ENCODE measurements at regions of chr10 and their contacts with region 1.

Region 1: DNA sequence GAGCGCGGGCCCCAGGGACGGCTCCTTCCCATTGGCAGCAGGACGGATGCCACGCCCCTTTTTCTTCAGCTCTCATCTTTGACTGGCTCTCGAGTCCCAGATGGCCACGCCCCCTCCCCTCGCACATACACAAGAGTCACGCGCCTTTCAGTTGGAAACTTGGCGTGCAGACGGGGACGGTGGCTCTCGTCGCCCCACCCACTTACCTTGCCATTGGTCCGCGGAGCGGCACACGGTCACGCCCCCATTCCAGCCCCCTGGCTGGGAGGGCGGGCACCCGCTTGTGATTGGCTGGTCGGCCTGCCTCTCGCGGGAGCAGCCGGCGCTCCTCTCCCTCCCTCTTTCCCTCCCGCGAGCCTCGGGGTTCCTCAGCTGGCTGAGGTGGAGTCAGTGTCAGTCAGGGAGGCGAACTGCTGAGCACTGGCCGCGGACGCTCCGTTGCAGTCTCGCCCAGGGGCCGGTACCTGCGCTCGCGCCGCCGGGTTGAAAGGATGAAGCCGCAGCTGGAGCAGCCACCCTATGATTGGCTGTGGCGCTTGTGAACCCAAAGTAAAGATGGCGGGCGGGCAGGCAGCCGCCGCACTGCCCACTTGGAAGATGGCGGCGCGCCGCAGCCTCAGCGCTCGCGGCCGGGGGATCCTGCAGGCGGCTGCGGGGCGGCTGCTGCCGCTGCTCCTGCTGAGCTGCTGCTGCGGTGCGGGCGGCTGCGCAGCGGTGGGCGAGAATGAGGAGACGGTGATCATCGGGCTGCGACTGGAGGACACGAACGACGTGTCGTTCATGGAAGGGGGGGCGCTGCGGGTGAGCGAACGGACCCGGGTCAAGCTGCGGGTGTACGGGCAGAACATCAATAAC is at the start of gene CNNM2:
- DNase-seq: peak; percentile 99
- H3K27ac ChIP-seq: peak within 1 kb of the TSS; percentile 88
- CTCF ChIP-seq: no peak

Region 2: DNA sequence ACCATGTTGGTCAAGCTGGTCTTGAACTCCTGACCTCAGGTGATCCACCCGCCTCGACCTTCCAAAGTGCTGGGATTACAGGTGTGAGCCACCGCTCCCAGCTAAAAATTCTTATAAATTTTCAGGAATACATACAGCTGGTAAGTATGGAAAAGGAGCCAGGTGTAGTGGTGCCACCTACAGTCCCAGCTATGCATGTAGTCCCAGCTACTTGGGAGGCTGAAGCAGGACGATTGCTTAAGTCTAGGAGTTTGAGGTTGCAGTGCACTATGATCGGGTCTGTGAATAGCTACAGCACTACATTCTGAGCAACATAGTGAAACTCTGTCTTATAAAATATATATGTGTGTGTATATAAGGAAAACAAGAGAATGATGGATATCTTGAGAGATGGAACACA is 817.0 kb before region 1 on chr10:
- CTCF ChIA-PET with region 1: no interaction called
- POLR2A ChIA-PET with region 1: no interaction called
- DNase-seq: no peak
- H3K27ac ChIP-seq: no peak overlapping the region
- CTCF ChIP-seq: no peak

Region 3: GRCh38 chr10:103069453-103070331 is 151.5 kb after region 1 on chr10:
- CTCF ChIA-PET with region 1: interaction called, 86 read pairs
- POLR2A ChIA-PET with region 1: no interaction called
- DNase-seq: peak; percentile 68
- H3K27ac ChIP-seq: no peak overlapping the region
- CTCF ChIP-seq: peak; percentile 76